ENCODE measurements at regions of chr16 and their contacts with region 1.

Region 1: DNA sequence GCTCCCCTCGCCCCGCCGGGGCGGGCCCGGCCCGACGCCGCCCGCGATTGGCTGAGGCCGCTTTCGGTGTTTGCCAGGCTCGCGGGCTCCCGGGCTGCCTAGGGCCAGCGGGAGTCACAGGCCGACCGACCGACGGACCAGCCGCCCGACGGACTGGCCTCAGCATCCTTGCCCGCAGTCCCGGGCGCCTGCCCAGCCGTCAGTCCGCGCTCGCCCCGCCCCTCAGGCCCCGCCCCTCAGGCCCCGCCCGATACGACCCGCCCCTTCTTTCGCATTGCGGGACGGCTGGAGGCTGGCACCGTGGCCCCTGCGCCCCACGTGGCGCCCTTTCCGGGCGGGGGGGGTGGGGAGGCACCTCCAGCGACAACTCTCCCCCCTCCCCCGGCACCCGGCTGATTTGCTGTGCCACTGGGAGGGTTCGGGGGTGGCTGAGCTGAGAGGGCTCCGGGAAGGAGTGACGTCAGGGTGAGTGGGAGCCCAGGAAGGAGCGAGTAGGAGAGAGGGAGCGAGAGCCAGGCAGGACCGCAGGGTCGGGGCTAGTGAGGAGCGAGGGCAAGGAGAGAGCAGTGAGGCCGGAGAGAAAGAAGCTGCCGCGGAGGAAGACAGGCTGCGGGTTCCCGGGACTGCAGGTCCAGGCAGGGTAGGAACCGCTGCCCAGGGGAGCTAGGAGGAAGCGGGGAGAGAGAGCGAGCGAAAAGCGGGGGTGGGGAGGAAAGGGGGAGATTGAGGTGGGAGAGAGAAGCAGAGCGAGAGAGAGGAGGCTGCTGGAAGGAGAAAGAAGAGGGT is at the start of gene ASPHD1:
- DNase-seq: peak; percentile 86
- ATAC-seq: peak; percentile 54
- H3K4me3 Mint-ChIP-seq: peak within 1 kb of the TSS; percentile 98
- H3K27ac Mint-ChIP-seq: peak within 1 kb of the TSS; percentile 91
- H3K4me1 Mint-ChIP-seq: peaks cover 33% of the 10 kb centered on the region
- H3K27me3 Mint-ChIP-seq: no peaks in the 10 kb centered on the region
- CTCF ChIP-seq: no peak
- total RNA-seq, gene ASPHD1: 17.6 to 26.9 TPM (median 20.2 TPM) in 3 replicates

Region 2: GRCh38 chr16:29790183-29790952 is 109.9 kb before region 1 on chr16 and contains the start of gene KIF22:
- CTCF ChIA-PET with region 1: interaction called, 11 read pairs
- POLR2A ChIA-PET with region 1: no interaction called
- DNase-seq: peak; percentile 100
- ATAC-seq: peak; percentile 96
- H3K4me3 Mint-ChIP-seq: peak within 1 kb of the TSS; percentile 98
- H3K27ac Mint-ChIP-seq: peak within 1 kb of the TSS; percentile 97
- H3K4me1 Mint-ChIP-seq: peaks cover 25% of the 10 kb centered on the region
- H3K27me3 Mint-ChIP-seq: peaks cover 19% of the 10 kb centered on the region
- CTCF ChIP-seq: no peak
- total RNA-seq, gene KIF22: 165 to 182 TPM (median 175 TPM) in 3 replicates

Region 3: GRCh38 chr16:29815793-29816693 is 84.3 kb before region 1 on chr16 and contains the start of gene PAGR1:
- CTCF ChIA-PET with region 1: interaction called, 12 read pairs
- POLR2A ChIA-PET with region 1: interaction called, 3 read pairs
- DNase-seq: peak; percentile 98
- ATAC-seq: peak; percentile 56
- H3K4me3 Mint-ChIP-seq: peak within 1 kb of the TSS; percentile 94
- H3K27ac Mint-ChIP-seq: peak within 1 kb of the TSS; percentile 100
- H3K4me1 Mint-ChIP-seq: peaks cover 56% of the 10 kb centered on the region
- H3K27me3 Mint-ChIP-seq: no peaks in the 10 kb centered on the region; the same call in 1 of the 2 replicates
- CTCF ChIP-seq: peak; percentile 81
- total RNA-seq, gene PAGR1: 60.1 to 69.0 TPM (median 66.8 TPM) in 3 replicates

Region 4: GRCh38 chr16:29857133-29857760 is 43.0 kb before region 1 on chr16:
- CTCF ChIA-PET with region 1: no interaction called
- POLR2A ChIA-PET with region 1: no interaction called
- DNase-seq: no peak
- ATAC-seq: no peak
- H3K4me3 Mint-ChIP-seq: no peak overlapping the region
- H3K27ac Mint-ChIP-seq: peak overlapping the region; percentile 61; the same call in 1 of the 2 replicates
- H3K4me1 Mint-ChIP-seq: peaks cover 12% of the 10 kb centered on the region
- H3K27me3 Mint-ChIP-seq: no peaks in the 10 kb centered on the region
- CTCF ChIP-seq: no peak

Region 5: DNA sequence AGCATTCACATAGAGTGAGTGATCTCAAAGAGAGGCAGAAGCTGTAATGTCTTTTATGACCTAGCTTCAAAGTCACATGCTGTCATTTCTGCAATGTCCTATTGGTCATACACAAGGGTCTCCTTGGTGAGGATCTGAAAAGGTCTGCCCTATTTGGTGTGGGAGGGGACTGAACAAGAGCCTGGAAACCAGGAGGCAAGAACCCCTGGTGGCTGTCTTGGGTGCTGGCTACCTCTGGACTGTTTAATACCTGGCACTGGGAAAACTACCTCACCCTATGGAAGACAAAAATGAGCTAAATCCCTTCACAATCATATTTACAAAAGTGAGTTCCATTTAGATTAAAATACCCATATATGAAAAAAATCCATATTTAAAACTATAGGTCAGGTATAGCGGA is 16.7 kb after region 1 on chr16:
- CTCF ChIA-PET with region 1: interaction called, 11 read pairs
- POLR2A ChIA-PET with region 1: no interaction called
- DNase-seq: no peak
- ATAC-seq: no peak
- H3K4me3 Mint-ChIP-seq: no peak overlapping the region
- H3K27ac Mint-ChIP-seq: no peak overlapping the region
- H3K4me1 Mint-ChIP-seq: peaks cover 4% of the 10 kb centered on the region
- H3K27me3 Mint-ChIP-seq: no peaks in the 10 kb centered on the region
- CTCF ChIP-seq: no peak

Region 6: DNA sequence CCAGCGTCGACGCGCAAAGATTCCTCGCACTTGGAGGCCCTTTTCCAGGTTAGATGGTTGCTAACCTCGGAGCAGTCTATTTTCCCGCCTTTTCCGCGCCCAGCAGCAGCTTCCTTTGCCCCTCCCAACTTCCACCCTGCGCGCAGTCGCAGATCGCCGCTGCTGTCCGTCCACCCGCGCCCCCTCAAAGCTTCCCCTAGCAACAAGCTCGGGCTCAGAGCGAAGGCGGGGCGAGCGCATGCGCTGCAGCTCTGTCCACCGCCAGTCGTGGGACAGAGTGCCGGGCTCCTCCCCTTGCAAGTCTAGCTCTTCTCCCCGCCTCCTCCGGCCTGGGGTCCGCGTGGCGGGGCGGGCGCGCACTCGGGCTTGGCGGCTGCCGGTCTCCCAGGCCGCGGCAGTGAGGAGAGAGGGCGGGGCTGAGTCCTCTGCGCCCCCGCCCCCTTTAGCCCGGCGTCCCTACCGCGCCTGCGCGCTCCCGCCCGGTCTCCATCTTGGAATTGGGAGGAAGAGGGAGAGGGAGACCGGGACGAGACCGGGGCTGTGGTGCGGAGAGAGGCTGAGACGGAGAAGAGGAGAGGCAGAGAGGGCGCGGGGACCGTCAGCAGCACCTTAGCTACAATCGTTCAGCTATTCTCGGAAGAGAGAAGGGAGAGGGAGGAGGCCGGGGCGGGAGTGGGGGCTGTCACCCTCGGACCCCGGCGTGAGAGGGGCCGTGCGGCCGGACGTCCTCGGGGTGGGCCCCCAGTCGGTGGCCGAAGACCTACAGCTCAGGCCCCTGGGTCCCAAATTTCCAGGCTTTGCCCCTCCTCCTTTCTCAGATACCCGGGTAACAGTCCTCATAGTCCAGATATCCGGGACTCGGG is 73.3 kb after region 1 on chr16 and contains the start of gene TAOK2:
- CTCF ChIA-PET with region 1: interaction called, 12 read pairs
- POLR2A ChIA-PET with region 1: interaction called, 14 read pairs
- DNase-seq: peak; percentile 100
- ATAC-seq: peak; percentile 97
- H3K4me3 Mint-ChIP-seq: peak within 1 kb of the TSS; percentile 92
- H3K27ac Mint-ChIP-seq: peak within 1 kb of the TSS; percentile 82
- H3K4me1 Mint-ChIP-seq: peaks cover 27% of the 10 kb centered on the region
- H3K27me3 Mint-ChIP-seq: peaks cover 21% of the 10 kb centered on the region
- CTCF ChIP-seq: no peak
- total RNA-seq, gene TAOK2: 38.3 to 42.4 TPM (median 39.2 TPM) in 3 replicates

Region 7: DNA sequence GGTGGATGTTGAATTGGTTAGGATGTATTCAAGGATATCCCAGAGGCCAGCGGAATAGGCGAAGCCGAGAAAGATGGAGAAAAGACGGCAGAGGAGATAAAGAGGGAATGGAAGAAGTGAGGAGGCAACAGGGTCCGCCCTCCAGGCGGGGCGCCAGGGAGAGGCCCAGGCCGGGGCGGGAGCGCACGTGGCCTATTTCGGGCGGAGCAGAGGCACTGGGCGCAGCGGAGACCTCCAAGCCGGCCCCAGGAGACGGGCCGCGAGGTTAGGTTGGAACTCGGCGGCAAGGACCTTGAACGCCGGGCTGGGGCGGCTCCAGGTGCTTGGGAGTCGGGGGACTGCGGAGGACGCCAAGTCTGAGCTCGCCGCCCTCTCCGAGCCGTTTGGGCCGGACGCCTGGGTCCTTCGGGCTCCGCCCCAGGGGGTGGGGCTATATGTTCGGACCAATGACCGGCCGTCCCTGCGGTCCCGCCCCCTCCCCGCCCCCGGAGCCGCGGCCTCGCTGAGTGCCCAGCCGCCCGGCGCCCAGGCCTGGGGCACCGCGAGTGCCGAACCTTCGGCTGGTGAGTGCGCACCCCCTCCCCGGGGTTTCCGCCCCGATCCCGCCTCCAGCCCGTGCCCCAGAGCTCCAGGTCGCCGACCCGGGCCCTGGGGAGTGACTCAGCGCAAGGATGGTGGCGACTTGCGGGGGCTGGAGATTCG is 507.0 kb after region 1 on chr16 and contains the start of gene ZNF771:
- CTCF ChIA-PET with region 1: no interaction called
- POLR2A ChIA-PET with region 1: no interaction called
- DNase-seq: peak; percentile 96
- ATAC-seq: peak; percentile 84
- H3K4me3 Mint-ChIP-seq: peak within 1 kb of the TSS; percentile 90
- H3K27ac Mint-ChIP-seq: peak within 1 kb of the TSS; percentile 93
- H3K4me1 Mint-ChIP-seq: peaks cover 20% of the 10 kb centered on the region
- H3K27me3 Mint-ChIP-seq: peaks cover 21% of the 10 kb centered on the region
- CTCF ChIP-seq: no peak
- total RNA-seq, gene ZNF771: 10.0 to 12.5 TPM (median 11.3 TPM) in 3 replicates

Measured in WTC11 (cell line).